ENCODE measurements at regions of chr9 and their contacts with region 1.

Region 1: GRCh38 chr9:134660407-134660806 is 18.8 kb downstream of the COL5A1 start:
- DNase-seq: no peak
- H3K4me3 ChIP-seq: no peak overlapping the region
- H3K27ac ChIP-seq: peak overlapping the region in 1 of 2 donors; percentile 80
- H3K4me1 ChIP-seq: no peaks in the 10 kb centered on the region
- H3K27me3 ChIP-seq: no peaks in the 10 kb centered on the region
- CTCF ChIP-seq: peak; percentile 12 to 28 (median 13)
- POLR2A ChIP-seq: no peak

Region 2: DNA sequence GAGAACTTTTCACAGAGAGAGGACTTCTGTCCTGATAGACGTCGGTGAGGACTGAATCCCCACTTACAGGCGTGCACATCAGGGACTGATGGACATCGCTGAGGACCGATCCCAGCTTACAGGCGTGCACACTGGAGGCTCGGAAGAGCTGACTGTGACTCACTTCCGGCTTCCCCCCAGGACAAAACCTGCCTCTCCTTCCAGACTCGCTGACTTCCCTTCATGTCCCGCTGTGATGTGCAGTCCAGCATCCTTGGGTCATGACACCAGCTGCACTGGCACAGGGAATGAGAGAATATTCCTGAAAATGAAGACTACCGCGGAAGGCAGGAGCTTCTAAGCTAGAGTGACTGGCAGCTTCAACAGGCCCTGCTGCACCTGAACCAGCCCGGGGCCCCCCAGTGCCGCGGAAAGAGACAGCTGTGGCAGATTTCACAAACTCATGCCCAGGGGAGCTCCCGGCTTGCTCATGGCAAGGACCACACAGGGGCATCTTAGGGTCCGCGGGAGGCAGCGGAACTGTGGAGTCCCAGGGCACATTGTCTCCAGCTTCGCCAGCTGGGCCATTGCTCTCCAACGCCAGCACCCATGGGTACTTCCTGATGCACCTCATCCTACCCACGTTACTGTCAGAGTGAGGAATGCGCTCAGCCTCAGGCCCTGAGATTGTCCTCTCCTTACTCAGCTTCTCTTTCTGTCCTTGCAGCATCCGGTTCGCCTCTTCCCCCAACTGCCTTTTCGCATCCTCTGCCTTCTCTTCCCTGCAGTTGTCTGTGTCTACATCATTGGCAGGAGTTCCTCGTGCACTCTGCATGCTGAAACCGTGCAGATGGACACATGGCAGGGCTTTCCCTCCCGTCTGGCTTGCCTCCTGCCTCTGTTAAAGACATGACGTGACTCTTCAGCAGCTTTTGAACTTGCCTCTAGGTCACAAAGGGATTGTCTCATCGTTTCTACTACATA is 1353.9 kb before region 1 on chr9:
- intact Hi-C with region 1: no loop called
- DNase-seq: no peak
- H3K4me3 ChIP-seq: no peak overlapping the region
- H3K27ac ChIP-seq: no peak overlapping the region
- H3K4me1 ChIP-seq: no peaks in the 10 kb centered on the region
- H3K27me3 ChIP-seq: peaks cover 0 to 15% of the 10 kb centered on the region in 2 donors
- CTCF ChIP-seq: no peak
- POLR2A ChIP-seq: no peak

Region 3: GRCh38 chr9:134571946-134572915 is 88.2 kb before region 1 on chr9:
- intact Hi-C with region 1: loop called (anchors 2 kb)
- DNase-seq: no peak
- H3K4me3 ChIP-seq: no peak overlapping the region
- H3K27ac ChIP-seq: no peak overlapping the region
- H3K4me1 ChIP-seq: no peaks in the 10 kb centered on the region
- H3K27me3 ChIP-seq: no peaks in the 10 kb centered on the region
- CTCF ChIP-seq: no peak
- POLR2A ChIP-seq: no peak

Measured in breast epithelium (tissue), 4 donors.